Motor neuron (in vitro differentiated cells): ENCODE measurements at regions of chrX and their contacts with region 1.

Region 1: DNA sequence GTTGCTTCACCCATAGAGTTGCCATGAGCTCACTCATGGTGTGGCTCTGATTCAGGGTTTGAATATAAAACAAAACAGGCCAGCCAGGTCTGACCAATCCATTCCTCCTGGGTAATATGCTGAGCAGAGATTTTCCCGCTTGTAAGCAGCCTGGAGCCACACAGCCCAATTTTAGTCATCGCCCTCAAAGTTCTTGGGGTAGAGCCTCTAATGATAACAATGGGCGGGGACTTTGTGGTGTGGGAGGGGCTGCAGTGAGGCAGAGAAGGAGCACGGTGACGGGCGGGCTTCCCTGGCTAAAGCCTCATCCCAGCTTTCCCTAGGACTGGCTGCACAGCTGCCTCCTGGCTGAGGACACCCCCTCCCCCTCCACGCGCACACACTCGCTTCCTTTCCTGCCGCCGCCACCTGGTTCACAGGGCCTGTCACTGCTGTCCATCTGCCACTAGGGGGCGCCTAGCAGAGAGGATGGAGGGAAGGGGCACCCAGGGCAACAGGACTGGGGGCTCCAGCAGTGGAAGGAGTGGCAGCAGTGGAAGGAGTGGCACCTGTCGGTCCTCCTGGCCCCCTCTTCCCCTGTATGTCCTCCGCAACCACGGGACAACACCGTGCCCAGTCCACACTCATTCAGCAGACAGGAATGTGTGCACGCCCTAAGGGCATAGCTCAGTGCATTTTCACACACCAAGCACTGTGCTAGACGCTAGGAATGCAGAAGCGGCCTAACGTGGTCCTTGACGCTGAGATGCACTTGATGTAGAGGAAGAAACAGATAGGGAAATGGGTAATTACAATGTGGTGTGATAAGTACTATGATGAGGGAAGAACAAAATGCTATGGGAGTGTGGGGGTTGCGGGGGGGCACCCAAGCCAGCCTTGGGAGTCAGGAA is 26.8 kb downstream of the PRPS1 start:
- ATAC-seq: peak; percentile 86 to 99 (median 96)
- H3K4me3 ChIP-seq: no peak overlapping the region
- H3K27ac ChIP-seq: no peak overlapping the region
- H3K4me1 ChIP-seq: no peaks in the 10 kb centered on the region

Region 2: DNA sequence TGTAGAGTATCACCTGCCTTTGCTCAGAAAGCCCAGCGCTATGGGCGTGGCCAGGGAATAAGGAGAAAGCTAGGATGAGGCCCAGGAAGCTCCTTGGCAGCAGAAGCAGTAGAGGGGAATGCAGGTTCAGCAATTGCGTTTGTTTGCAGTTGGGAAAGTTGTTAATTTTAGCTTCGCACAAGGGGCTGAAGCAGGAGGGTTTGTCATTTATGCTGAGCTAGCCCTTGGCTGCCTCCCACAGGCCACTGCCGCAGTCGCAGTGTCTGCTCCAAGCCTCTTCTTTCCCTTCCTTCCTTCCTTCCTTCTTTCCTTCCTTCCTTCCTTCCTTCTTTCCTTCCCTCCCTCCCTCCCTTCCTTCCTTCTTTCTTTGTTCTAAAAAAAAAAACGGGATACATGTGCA is 184.1 kb before region 1 on chrX:
- in situ Hi-C with region 1: no loop called
- ATAC-seq: no peak
- H3K4me3 ChIP-seq: no peak overlapping the region
- H3K27ac ChIP-seq: no peak overlapping the region
- H3K4me1 ChIP-seq: no peaks in the 10 kb centered on the region

Region 3: GRCh38 chrX:107776649-107777535 is 121.8 kb after region 1 on chrX:
- in situ Hi-C with region 1: loop called in 3 of 9 experiments (anchors 10 to 25 kb)
- ATAC-seq: peak; percentile 48 to 79 (median 67)
- H3K4me3 ChIP-seq: peak overlapping the region in 4 of 5 donors; percentile 13 to 46 (median 42)
- H3K27ac ChIP-seq: no peak overlapping the region
- H3K4me1 ChIP-seq: peaks cover 8 to 19% of the 10 kb centered on the region in 2 donors

Region 4: GRCh38 chrX:107787827-107788226 is 132.7 kb after region 1 on chrX:
- in situ Hi-C with region 1: loop called in 3 of 9 experiments (anchors 10 to 25 kb)
- ATAC-seq: no peak
- H3K4me3 ChIP-seq: no peak overlapping the region
- H3K27ac ChIP-seq: no peak overlapping the region
- H3K4me1 ChIP-seq: no peaks in the 10 kb centered on the region

Region 5: GRCh38 chrX:107894038-107894437 is 238.9 kb after region 1 on chrX:
- in situ Hi-C with region 1: loop called in 1 of 9 experiments (anchors 25 kb)
- ATAC-seq: peak in 3 of 8 experiments; percentile 45 to 68 (median 52)
- H3K4me3 ChIP-seq: no peak overlapping the region
- H3K27ac ChIP-seq: no peak overlapping the region
- H3K4me1 ChIP-seq: no peaks in the 10 kb centered on the region